ENCODE measurements at regions of chr6 and their contacts with region 1.

Region 1: DNA sequence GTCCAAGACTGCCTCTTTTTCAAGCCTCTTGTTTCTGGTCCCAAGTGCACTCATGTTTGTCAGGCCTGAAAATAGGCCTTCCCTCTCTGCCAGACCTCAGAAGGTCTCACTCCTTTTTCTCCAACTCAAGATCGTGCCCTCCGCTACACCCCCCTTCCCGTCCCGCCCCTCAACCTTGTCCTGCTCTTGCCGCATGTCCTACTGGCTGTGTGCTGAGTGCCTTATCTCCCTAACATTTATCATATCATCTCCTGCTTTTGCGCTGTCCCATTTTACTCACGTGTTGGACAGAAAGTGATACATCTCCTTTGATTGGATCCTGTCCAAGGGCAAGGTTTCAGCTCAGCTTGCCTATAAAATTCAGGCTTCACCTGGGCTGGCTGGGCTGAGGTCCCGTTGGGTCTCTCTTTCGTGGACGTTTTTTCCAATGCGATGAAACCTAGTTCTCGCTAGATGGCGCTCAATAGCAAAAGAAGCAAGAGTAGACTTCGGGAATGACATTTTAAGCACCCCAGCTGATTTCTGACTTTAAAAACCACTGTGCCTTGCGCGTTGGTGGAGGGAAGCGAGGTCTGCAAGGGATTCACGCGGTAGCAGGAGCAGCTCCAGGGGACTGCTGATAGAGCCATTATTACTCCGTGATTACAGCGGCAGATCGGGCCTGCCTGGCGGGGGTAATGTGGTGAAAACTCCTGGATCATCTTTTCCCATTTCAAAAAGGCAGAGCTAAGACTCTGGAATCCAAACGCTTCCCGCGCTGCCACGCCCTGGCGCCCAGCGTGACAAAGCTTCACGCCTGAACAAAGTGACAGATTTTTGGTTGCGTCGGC is 137.6 kb downstream of the IMPG1 start:
- DNase-seq: peak; percentile 77
- H3K4me3 ChIP-seq: peak overlapping the region; percentile 31 to 54
- H3K27ac ChIP-seq: no peak overlapping the region
- H3K4me1 ChIP-seq: peaks cover 0 to 9% of the 10 kb centered on the region in 2 experiments; a peak in 1 of 4 replicates
- H3K27me3 ChIP-seq: no peaks in the 10 kb centered on the region
- CTCF ChIP-seq: peak; percentile 82
- EP300 ChIP-seq: no peak
- RAD21 ChIP-seq: peak; percentile 87

Region 2: GRCh38 chr6:75893058-75893775 is 41.6 kb before region 1 on chr6:
- CTCF ChIA-PET with region 1: interaction called, 29 read pairs
- POLR2A ChIA-PET with region 1: no interaction called
- DNase-seq: peak; percentile 51
- H3K4me3 ChIP-seq: no peak overlapping the region
- H3K27ac ChIP-seq: no peak overlapping the region
- H3K4me1 ChIP-seq: no peaks in the 10 kb centered on the region
- H3K27me3 ChIP-seq: no peaks in the 10 kb centered on the region
- CTCF ChIP-seq: peak; percentile 82
- EP300 ChIP-seq: no peak
- RAD21 ChIP-seq: peak; percentile 84

Region 3: DNA sequence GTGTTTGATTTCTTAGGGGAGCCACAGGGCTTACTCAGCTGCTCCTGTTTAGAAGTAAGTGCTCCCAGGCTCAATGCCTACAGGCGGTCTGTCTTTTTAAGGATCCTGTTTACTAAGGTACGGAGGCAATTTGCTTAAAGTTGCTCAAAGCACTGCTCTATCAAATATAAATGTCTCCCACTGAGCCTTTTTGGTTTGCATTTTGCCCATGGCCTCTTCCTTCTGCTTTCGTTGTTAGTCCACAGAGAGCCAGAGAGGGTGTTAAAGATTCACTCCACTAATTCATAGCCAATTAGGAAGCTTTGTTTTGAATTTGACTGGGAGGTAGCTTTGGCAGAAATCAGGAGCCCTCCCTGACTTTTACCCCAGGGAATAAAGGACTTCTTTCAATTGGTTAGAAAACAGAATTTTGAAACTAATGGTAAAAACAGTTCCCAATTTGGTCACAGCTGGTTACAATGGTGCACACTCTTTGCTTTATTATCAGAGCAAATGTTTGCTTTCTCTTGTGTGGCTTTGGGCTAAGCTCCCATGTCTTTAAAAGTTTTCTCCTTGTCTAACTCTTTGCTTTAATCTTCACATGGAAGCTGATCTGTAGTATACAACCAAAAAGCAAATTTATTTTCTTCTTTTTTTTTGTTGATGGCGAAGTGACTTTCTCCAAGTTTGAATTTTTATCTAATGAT is 11.4 kb after region 1 on chr6:
- CTCF ChIA-PET with region 1: interaction called, 23 read pairs
- POLR2A ChIA-PET with region 1: no interaction called
- DNase-seq: no peak
- H3K4me3 ChIP-seq: no peak overlapping the region
- H3K27ac ChIP-seq: no peak overlapping the region
- H3K4me1 ChIP-seq: no peaks in the 10 kb centered on the region
- H3K27me3 ChIP-seq: peaks cover 49% of the 10 kb centered on the region
- CTCF ChIP-seq: no peak
- EP300 ChIP-seq: no peak
- RAD21 ChIP-seq: no peak

Region 4: GRCh38 chr6:75952128-75952527 is 17.3 kb after region 1 on chr6:
- CTCF ChIA-PET with region 1: interaction called, 23 read pairs
- POLR2A ChIA-PET with region 1: no interaction called
- DNase-seq: no peak
- H3K4me3 ChIP-seq: no peak overlapping the region
- H3K27ac ChIP-seq: no peak overlapping the region
- H3K4me1 ChIP-seq: no peaks in the 10 kb centered on the region
- H3K27me3 ChIP-seq: peaks cover 19% of the 10 kb centered on the region
- CTCF ChIP-seq: no peak
- EP300 ChIP-seq: no peak
- RAD21 ChIP-seq: no peak

Region 5: DNA sequence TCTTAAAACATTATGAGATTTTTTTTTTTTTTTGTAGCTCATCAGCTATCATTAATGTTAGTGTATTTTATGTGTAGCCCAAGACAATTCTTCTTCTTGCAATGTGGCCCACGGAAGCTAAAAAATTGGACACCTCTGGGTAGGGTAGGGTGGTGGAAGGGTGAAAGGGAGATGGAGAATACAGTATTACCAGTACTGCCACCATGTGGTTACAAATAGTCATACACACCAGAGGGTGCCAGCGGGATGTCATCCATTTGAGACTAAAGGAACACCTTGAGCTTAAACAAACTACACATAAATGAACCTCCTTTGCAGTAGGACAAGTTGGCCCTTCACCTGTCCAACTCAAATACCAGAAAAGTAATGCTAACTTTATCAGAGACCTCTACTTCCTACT is 926.5 kb after region 1 on chr6:
- CTCF ChIA-PET with region 1: interaction called, 13 read pairs
- POLR2A ChIA-PET with region 1: interaction called, 6 read pairs
- DNase-seq: peak; percentile 16
- H3K4me3 ChIP-seq: no peak overlapping the region; a peak in 1 of 4 replicates
- H3K27ac ChIP-seq: no peak overlapping the region
- H3K4me1 ChIP-seq: no peaks in the 10 kb centered on the region
- H3K27me3 ChIP-seq: no peaks in the 10 kb centered on the region
- CTCF ChIP-seq: peak; percentile 55
- EP300 ChIP-seq: no peak
- RAD21 ChIP-seq: peak; percentile 39

Region 6: GRCh38 chr6:76877238-76877553 is 942.3 kb after region 1 on chr6:
- CTCF ChIA-PET with region 1: interaction called, 14 read pairs
- POLR2A ChIA-PET with region 1: no interaction called
- DNase-seq: no peak
- H3K4me3 ChIP-seq: peak overlapping the region in 1 of 2 experiments; percentile 54; a peak in 2 of 4 replicates
- H3K27ac ChIP-seq: no peak overlapping the region
- H3K4me1 ChIP-seq: no peaks in the 10 kb centered on the region
- H3K27me3 ChIP-seq: no peaks in the 10 kb centered on the region
- CTCF ChIP-seq: no peak
- EP300 ChIP-seq: no peak
- RAD21 ChIP-seq: no peak